Right cardiac atrium (tissue), 5 donors: ENCODE measurements at regions of chr7 and their contacts with region 1.

Region 1: DNA sequence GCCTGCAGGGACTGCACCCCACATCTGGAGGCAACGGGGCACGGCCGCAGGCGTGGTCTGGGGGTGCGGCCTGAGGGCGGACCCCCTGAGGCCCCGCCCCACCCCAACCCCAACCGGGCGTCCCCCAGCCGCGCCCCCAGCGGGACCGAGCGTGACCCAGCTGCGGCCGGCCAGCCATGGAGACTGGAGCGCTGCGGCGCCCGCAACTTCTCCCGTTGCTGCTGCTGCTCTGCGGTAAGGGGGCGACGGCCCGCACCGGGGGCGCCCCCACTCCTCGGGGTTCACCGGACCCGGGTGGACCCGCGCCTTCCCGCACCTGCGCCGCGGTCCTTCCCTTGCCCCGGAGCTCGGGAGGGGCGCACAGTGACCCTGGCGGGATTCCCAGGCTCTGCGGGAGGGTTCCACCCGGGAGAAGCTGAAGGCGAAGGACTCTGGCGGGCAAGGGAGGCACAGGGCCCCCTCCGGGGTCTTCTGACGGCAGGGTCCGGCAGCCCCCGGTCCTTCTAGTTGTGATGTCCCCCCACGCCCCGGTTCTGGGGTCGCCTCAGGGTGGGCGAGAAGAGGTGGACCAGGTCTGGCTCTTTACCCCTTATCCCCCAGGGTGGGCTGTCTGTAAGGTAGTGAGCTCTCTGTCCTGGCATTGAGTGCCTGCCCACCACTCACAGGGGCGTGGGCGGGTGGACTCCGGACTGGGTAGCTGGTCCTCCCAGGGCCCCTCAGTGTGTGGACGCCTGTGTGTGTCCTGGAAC is at the start of gene RAMP3:
- DNase-seq: peak; percentile 40 to 73 (median 73)
- ATAC-seq: peak; percentile 70 to 82
- H3K4me3 ChIP-seq: peak within 1 kb of the TSS; percentile 65
- H3K27ac ChIP-seq: peak within 1 kb of the TSS; percentile 81
- H3K4me1 ChIP-seq: no peaks in the 10 kb centered on the region
- H3K27me3 ChIP-seq: no peaks in the 10 kb centered on the region
- total RNA-seq, gene RAMP3: 22.2 to 45.5 (median 32.4) TPM

Region 2: GRCh38 chr7:45092100-45092928 is 65.5 kb before region 1 on chr7:
- intact Hi-C with region 1: no loop called
- DNase-seq: no peak
- ATAC-seq: no peak
- H3K4me3 ChIP-seq: no peak overlapping the region
- H3K27ac ChIP-seq: no peak overlapping the region
- H3K4me1 ChIP-seq: no peaks in the 10 kb centered on the region
- H3K27me3 ChIP-seq: no peaks in the 10 kb centered on the region

Region 3: DNA sequence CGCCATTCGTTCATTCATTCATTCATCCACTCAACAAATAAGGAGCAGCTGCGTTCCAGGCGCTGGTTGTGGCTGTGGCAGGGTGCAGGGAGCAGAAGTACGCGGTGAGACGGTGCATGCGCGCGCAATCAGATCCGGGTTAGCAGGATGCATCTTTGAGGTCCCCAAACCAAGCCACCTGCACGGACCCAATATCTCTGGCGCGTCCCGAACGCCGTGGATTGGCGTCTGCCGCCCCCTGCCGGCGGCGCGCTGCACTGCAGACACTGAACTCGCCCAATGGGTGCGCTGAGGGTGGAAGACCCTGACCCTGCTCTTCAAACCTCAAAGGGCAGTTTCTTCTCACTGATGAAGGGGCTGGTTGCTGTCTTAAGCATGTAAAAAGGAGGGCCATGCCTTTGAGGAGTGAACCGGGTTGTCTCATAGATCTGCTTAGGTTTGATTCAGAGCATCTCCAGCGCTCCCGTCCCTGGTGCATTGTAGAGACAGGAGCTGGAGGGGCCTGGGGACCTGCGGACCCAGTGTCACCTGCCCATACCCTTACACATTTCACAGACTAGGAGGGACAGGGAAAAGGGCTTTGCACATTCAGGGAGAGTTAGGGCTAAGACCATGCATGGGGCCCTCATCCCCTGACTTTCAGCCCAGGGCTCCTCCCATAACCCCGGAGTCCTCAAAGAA is 102.3 kb after region 1 on chr7:
- intact Hi-C with region 1: loop called (anchors 2 to 5 kb)
- DNase-seq: peak; percentile 49 to 86 (median 82)
- ATAC-seq: peak; percentile 85
- H3K4me3 ChIP-seq: no peak overlapping the region
- H3K27ac ChIP-seq: no peak overlapping the region
- H3K4me1 ChIP-seq: no peaks in the 10 kb centered on the region
- H3K27me3 ChIP-seq: no peaks in the 10 kb centered on the region

Region 4: GRCh38 chr7:45626441-45627430 is 468.9 kb after region 1 on chr7:
- intact Hi-C with region 1: no loop called
- DNase-seq: no peak
- ATAC-seq: no peak
- H3K4me3 ChIP-seq: no peak overlapping the region
- H3K27ac ChIP-seq: no peak overlapping the region
- H3K4me1 ChIP-seq: no peaks in the 10 kb centered on the region
- H3K27me3 ChIP-seq: no peaks in the 10 kb centered on the region

Region 5: DNA sequence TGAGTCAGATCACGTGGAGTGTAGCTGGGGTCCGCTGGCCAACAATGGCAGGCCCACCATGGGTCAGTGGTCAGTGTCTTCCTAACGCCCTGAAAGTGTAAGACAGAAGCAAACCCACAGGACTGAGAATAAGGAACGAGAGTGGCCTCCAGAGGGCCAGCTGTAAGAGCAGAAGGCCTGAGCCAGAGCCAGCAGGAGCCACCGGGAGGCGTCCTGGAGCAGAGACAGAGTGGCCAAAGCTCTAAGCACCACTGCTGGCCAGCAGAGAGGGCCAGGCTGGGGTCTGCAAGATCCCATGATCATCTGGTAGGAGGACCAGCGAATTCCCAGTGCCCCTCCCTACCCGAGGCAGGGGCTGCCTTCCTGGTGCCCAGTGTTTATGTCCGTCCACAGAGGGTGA is 705.9 kb after region 1 on chr7:
- intact Hi-C with region 1: loop called in 3 of 4 experiments (anchors 5 to 10 kb)
- DNase-seq: no peak
- ATAC-seq: no peak
- H3K4me3 ChIP-seq: no peak overlapping the region
- H3K27ac ChIP-seq: no peak overlapping the region
- H3K4me1 ChIP-seq: no peaks in the 10 kb centered on the region
- H3K27me3 ChIP-seq: peaks cover 2% of the 10 kb centered on the region